HepG2 (cell line): ENCODE measurements at regions of chr11 and their contacts with region 1.

Region 1: DNA sequence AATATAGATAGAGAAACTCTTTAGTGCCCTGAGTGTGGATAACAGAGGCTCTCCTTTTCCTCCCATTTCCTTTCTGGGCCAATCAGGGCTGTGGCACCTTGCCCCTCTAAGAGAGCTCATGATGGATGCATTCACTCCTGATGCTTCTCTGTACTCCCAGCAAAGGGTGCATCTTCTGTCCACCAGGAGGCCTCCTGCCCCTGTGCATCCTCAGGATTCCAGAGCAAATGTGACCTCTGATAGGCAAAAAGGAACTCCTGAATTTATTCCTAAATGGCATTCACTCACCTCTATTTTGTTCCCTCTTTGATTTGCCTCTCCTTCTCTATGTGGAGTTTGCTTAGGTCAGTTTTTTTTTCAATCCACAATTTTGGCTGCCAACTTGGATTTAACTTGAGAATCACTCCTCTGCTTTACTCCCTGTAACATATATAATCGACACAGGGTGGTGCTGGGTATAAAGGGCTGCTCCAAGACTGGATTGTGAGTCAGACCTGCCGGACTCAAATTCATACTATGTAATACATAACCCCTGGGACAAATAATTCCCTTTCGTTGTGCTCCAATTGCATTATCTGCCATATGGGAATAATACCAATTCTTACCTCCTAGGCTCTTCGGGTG is 1.1 kb upstream of the MRGPRX4 start:
- DNase-seq: peak; percentile 53
- ATAC-seq: peak; percentile 99
- H3K4me3 ChIP-seq: no peak overlapping the region
- H3K27ac ChIP-seq: no peak overlapping the region
- H3K4me1 ChIP-seq: peaks cover 17% of the 10 kb centered on the region; the same call in 1 of the 2 replicates
- H3K27me3 ChIP-seq: peaks cover 0 to 3% of the 10 kb centered on the region in 2 experiments; a peak in 2 of 5 replicates
- CTCF ChIP-seq: peak; percentile 90
- EP300 ChIP-seq: no peak
- POLR2A ChIP-seq: no peak
- RAD21 ChIP-seq: peak; percentile 82

Region 2: DNA sequence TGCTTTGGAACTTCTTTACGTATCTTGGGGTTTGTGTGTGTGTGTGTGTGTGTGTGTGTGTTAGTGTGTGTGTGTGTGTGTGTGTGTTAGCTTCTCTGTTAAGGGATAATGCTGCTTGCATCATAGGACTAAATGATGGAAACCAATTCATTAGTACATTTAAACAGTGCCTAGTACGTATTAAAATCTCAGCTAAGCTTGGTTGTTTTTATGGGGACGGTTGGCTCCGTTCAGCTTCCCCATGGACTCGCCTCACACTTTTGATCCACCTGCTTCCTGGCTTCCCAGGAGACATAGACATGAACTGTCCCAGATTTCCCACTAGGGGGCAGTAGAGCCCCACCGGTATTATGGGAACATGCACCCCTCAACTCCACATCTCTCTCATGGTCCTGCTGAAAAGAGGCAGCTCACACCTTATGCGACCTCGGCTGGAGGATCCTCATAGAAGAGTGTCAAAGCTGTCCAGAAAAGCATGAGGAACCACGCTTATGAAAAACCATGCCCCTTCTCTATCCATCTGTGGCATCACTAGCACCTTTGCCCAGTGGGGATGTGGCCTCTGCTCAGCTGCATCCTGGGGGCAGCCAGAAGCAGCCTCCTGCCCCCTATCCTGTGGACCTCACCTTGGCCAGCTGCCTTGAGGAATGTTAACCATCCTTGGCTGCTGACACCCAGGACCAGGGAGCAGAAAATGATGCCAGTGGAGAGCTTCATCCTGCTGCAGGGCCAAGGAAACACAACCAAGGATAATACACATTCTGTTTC is 55.9 kb before region 1 on chr11:
- CTCF ChIA-PET with region 1: no interaction called
- POLR2A ChIA-PET with region 1: no interaction called
- in situ Hi-C with region 1: no loop called
- intact Hi-C with region 1: loop called (anchors 1 kb)
- DNase-seq: peak; percentile 75
- ATAC-seq: peak; percentile 96
- H3K4me3 ChIP-seq: no peak overlapping the region
- H3K27ac ChIP-seq: no peak overlapping the region
- H3K4me1 ChIP-seq: peaks cover 53% of the 10 kb centered on the region
- H3K27me3 ChIP-seq: peaks cover 0 to 4% of the 10 kb centered on the region in 2 experiments; a peak in 2 of 5 replicates
- CTCF ChIP-seq: peak; percentile 96
- EP300 ChIP-seq: no peak
- POLR2A ChIP-seq: no peak
- RAD21 ChIP-seq: peak; percentile 92

Region 3: DNA sequence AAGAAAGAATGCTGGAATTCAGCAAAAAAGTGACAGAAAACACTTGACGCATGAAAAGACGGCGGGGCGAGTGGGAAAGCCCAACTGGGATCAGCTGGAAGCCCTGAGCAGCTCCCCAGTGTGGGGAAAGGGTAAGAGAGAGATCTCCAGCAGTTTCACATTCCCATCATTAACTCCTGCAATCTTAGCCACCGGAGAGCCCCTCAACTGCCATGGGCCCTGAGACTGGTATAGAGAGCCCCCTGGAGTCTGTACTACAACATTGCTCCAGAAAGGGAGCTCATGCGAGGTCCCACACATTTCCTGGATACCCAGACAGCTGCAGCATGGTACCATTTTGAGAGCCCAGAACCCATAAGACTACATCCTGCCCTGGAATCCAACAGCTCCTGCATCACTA is 32.2 kb after region 1 on chr11:
- CTCF ChIA-PET with region 1: interaction called, 4 read pairs
- POLR2A ChIA-PET with region 1: no interaction called
- in situ Hi-C with region 1: no loop called
- intact Hi-C with region 1: loop called (anchors 1 kb)
- DNase-seq: peak; percentile 31
- ATAC-seq: peak; percentile 96
- H3K4me3 ChIP-seq: no peak overlapping the region
- H3K27ac ChIP-seq: no peak overlapping the region
- H3K4me1 ChIP-seq: peaks cover 9% of the 10 kb centered on the region; the same call in 1 of the 2 replicates
- H3K27me3 ChIP-seq: peaks cover 0 to 4% of the 10 kb centered on the region in 2 experiments; a peak in 1 of 5 replicates
- CTCF ChIP-seq: peak; percentile 66
- EP300 ChIP-seq: no peak
- POLR2A ChIP-seq: no peak
- RAD21 ChIP-seq: peak; percentile 73

Region 4: DNA sequence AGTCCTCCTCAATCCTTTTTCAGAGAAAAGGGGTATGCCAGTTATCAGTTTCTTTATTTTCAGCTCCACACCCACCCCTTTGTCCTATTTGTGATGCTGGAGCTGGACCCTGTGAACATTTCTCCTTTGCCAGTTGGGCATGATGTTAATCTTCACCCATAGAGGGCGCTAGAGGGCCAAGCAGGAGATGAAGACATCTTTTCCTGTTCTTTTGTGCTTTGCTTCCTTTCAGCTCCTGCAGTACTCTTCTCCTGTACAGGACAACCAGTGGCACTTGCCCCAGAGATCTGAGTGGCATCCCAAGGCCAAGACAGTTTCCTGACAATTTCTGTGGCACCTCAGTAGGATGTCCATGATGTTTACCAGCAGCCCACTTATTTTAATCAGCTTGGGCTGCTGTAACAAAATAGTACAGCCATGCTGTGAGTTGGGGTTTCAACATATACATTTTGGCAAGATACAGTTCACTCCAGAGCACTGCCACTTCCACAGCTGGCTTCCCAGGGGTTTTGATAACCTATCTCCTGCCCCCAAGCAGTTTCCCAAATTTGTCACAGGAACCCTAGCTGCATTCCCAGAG is 72.4 kb after region 1 on chr11:
- CTCF ChIA-PET with region 1: interaction called, 4 read pairs
- POLR2A ChIA-PET with region 1: no interaction called
- in situ Hi-C with region 1: no loop called
- intact Hi-C with region 1: loop called (anchors 5 kb)
- DNase-seq: peak; percentile 52
- ATAC-seq: peak; percentile 42
- H3K4me3 ChIP-seq: no peak overlapping the region
- H3K27ac ChIP-seq: no peak overlapping the region
- H3K4me1 ChIP-seq: peaks cover 23% of the 10 kb centered on the region
- H3K27me3 ChIP-seq: peaks cover 0 to 3% of the 10 kb centered on the region in 2 experiments; a peak in 1 of 5 replicates
- CTCF ChIP-seq: peak; percentile 88
- EP300 ChIP-seq: no peak
- POLR2A ChIP-seq: no peak
- RAD21 ChIP-seq: peak; percentile 66

Region 5: DNA sequence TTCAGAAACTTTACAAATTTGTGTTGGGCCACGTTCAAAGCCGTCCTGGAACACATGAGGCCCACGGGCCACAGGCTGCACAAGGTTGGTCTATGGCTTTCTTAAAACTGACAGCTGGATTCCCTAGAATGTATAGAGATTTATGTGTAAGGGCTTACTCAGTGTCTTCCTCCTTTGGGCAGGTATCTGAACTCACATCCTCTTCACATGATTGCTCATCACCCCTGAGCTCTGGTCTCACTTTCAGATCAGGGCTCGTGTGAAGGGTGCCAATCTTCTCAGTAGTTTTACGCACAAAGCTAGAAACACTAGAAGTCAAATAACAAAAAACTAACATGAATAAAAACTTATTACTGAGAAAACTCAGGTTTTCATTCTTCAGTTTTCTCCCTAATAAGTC is 123.4 kb after region 1 on chr11:
- CTCF ChIA-PET with region 1: no interaction called
- POLR2A ChIA-PET with region 1: no interaction called
- in situ Hi-C with region 1: no loop called
- intact Hi-C with region 1: loop called (anchors 10 kb)
- DNase-seq: no peak
- ATAC-seq: no peak
- H3K4me3 ChIP-seq: no peak overlapping the region
- H3K27ac ChIP-seq: no peak overlapping the region
- H3K4me1 ChIP-seq: no peaks in the 10 kb centered on the region
- H3K27me3 ChIP-seq: no peaks in the 10 kb centered on the region
- CTCF ChIP-seq: no peak
- EP300 ChIP-seq: no peak
- POLR2A ChIP-seq: no peak
- RAD21 ChIP-seq: no peak

Region 6: GRCh38 chr11:18768472-18768901 is 597.0 kb after region 1 on chr11:
- CTCF ChIA-PET with region 1: interaction called, 3 read pairs
- POLR2A ChIA-PET with region 1: no interaction called
- in situ Hi-C with region 1: no loop called
- intact Hi-C with region 1: loop called (anchors 2 kb)
- DNase-seq: no peak
- ATAC-seq: no peak
- H3K4me3 ChIP-seq: no peak overlapping the region
- H3K27ac ChIP-seq: no peak overlapping the region
- H3K4me1 ChIP-seq: peaks cover 15% of the 10 kb centered on the region
- H3K27me3 ChIP-seq: peaks cover 5 to 23% of the 10 kb centered on the region in 2 experiments; a peak in 3 of 5 replicates
- CTCF ChIP-seq: no peak
- EP300 ChIP-seq: no peak
- POLR2A ChIP-seq: no peak
- RAD21 ChIP-seq: no peak